Caco-2 (cell line): ENCODE measurements at regions of chr19 and their contacts with region 1.

Region 1: GRCh38 chr19:57578487-57579205 is at the start of gene ZNF416:
- DNase-seq: peak; percentile 97 to 98
- H3K4me3 ChIP-seq: peak within 1 kb of the TSS; percentile 83
- H3K4me3 Mint-ChIP-seq: peak within 1 kb of the TSS; percentile 77
- H3K27ac Mint-ChIP-seq: peak within 1 kb of the TSS; percentile 37
- H3K4me1 ChIP-seq: no peaks in the 10 kb centered on the region
- H3K4me1 Mint-ChIP-seq: no peaks in the 10 kb centered on the region
- H3K27me3 ChIP-seq: no peaks in the 10 kb centered on the region
- H3K27me3 Mint-ChIP-seq: no peaks in the 10 kb centered on the region
- CTCF ChIP-seq: peak in 1 of 2 experiments; percentile 43
- total RNA-seq, gene ZNF416: 5.5 and 6.1 TPM in 2 replicates

Region 2: GRCh38 chr19:57599761-57600383 is 21.2 kb after region 1 on chr19 and contains the start of gene ZNF530:
- CTCF ChIA-PET with region 1: no interaction called
- POLR2A ChIA-PET with region 1: no interaction called
- intact Hi-C with region 1: loop called (anchors 1 kb)
- DNase-seq: peak; percentile 88 to 92
- H3K4me3 ChIP-seq: peak within 1 kb of the TSS; percentile 83
- H3K4me3 Mint-ChIP-seq: peak within 1 kb of the TSS; percentile 77
- H3K27ac Mint-ChIP-seq: peak within 1 kb of the TSS; percentile 19
- H3K4me1 ChIP-seq: no peaks in the 10 kb centered on the region; the same call in 1 of the 2 replicates
- H3K4me1 Mint-ChIP-seq: no peaks in the 10 kb centered on the region
- H3K27me3 ChIP-seq: no peaks in the 10 kb centered on the region
- H3K27me3 Mint-ChIP-seq: peaks cover 4% of the 10 kb centered on the region
- CTCF ChIP-seq: peak in 1 of 2 experiments; percentile 1
- total RNA-seq, gene ZNF530: 8.6 and 8.8 TPM in 2 replicates

Region 3: GRCh38 chr19:57682226-57682766 is 103.7 kb after region 1 on chr19:
- CTCF ChIA-PET with region 1: no interaction called
- POLR2A ChIA-PET with region 1: no interaction called
- intact Hi-C with region 1: loop called (anchors 1 kb)
- DNase-seq: no peak
- H3K4me3 ChIP-seq: peak overlapping the region; percentile 98
- H3K4me3 Mint-ChIP-seq: peak overlapping the region; percentile 86
- H3K27ac Mint-ChIP-seq: peak overlapping the region; percentile 88
- H3K4me1 ChIP-seq: peaks cover 6% of the 10 kb centered on the region; the same call in 1 of the 2 replicates
- H3K4me1 Mint-ChIP-seq: peaks cover 21% of the 10 kb centered on the region
- H3K27me3 ChIP-seq: no peaks in the 10 kb centered on the region
- H3K27me3 Mint-ChIP-seq: no peaks in the 10 kb centered on the region
- CTCF ChIP-seq: no peak

Region 4: GRCh38 chr19:57769345-57770131 is 190.9 kb after region 1 on chr19 and contains the start of gene ZNF586:
- CTCF ChIA-PET with region 1: no interaction called
- POLR2A ChIA-PET with region 1: no interaction called
- intact Hi-C with region 1: loop called (anchors 1 kb)
- DNase-seq: peak; percentile 78 to 82
- H3K4me3 ChIP-seq: peak within 1 kb of the TSS; percentile 68
- H3K4me3 Mint-ChIP-seq: peak within 1 kb of the TSS; percentile 72
- H3K27ac Mint-ChIP-seq: no peak within 1 kb of the TSS
- H3K4me1 ChIP-seq: no peaks in the 10 kb centered on the region
- H3K4me1 Mint-ChIP-seq: no peaks in the 10 kb centered on the region
- H3K27me3 ChIP-seq: no peaks in the 10 kb centered on the region
- H3K27me3 Mint-ChIP-seq: no peaks in the 10 kb centered on the region
- CTCF ChIP-seq: no peak
- total RNA-seq, gene ZNF586: 6.2 and 9.1 TPM in 2 replicates

Region 5: GRCh38 chr19:57914531-57914930 is 335.9 kb after region 1 on chr19:
- CTCF ChIA-PET with region 1: no interaction called
- POLR2A ChIA-PET with region 1: no interaction called
- intact Hi-C with region 1: loop called (anchors 1 kb)
- DNase-seq: no peak
- H3K4me3 ChIP-seq: no peak overlapping the region
- H3K4me3 Mint-ChIP-seq: peak overlapping the region; percentile 39
- H3K27ac Mint-ChIP-seq: no peak overlapping the region
- H3K4me1 ChIP-seq: 0 out of 2 replicates have a peak, but pooled peaks cover 3% of the 10 kb centered on the region
- H3K4me1 Mint-ChIP-seq: peaks cover 11% of the 10 kb centered on the region
- H3K27me3 ChIP-seq: no peaks in the 10 kb centered on the region
- H3K27me3 Mint-ChIP-seq: no peaks in the 10 kb centered on the region
- CTCF ChIP-seq: no peak